ENCODE measurements at regions of chr17 and their contacts with region 1.

Region 1: DNA sequence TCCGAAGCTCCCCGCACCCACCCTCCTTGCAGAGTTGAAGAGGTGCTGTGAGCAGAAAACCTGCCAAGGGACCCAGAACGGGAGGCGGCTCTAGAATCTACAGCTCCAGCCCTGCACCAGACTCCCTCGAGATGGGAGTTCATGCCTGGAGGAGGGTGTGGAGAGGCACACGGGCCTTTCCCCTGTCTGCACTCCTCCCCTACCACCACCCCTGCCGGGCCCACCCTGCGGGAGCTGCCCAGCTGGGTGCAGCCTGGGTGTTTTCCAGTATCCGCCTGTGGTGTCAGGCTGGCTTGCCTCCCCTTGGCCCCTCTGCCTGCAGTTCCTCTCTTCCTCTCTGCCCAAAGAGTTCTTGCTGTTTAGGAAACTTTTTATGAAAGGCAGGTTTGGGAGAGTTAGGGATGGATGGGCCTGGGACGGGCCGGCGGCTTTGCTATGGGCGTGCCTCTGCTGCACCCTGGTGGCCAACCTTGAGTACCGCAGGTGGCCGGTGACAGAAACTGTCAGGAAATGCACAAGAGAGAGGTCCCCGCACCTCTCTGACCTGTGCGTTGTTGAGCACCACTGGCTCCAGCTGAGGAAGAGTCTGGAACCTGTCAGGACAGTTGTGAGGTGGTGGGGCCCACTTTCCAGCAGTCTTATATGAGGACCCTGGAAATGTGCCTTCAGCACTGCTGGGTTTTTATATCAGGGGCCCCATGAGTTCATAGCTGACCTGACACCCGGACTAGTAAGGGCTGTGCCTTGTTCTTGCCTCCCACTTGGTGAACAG is 354.1 kb downstream of the SEC14L1 start:
- DNase-seq: peak; percentile 82
- H3K4me3 Mint-ChIP-seq: peak overlapping the region; percentile 4
- H3K27ac Mint-ChIP-seq: peak overlapping the region; percentile 75
- H3K4me1 Mint-ChIP-seq: peaks cover 13% of the 10 kb centered on the region
- H3K27me3 Mint-ChIP-seq: no peaks in the 10 kb centered on the region

Region 2: DNA sequence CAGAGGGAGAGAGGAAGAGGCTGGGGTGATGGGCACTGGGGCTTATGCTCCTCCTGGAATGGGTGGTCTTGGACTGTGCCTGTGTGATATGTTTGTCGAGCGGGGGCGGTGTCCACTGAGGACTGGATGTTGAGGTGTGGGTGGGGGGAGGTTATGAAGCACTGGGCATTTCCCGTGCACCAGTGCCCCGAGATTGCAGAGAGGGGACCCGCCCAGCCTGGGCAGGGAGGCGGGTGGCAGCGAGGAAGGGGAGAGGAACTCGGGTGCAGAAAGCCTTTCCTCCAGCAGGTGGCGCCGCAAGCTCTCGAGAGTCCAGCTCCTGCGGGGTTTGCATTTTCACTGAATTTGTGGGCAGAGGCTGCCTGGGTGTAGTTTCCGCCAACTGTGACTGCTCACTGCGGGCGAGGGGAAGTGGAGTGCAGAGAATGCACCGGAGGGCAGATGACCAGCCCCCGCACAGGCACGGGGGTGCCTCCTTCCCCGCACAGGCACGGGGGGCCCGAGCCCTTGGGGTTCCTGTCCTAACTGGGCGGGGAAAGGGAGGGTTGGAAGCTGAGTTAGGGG is 163.5 kb before region 1 on chr17:
- CTCF ChIA-PET with region 1: interaction called, 38 read pairs
- POLR2A ChIA-PET with region 1: interaction called, 3 read pairs
- intact Hi-C with region 1: loop called (anchors 1 kb)
- DNase-seq: peak; percentile 97
- H3K4me3 Mint-ChIP-seq: peak overlapping the region; percentile 64
- H3K27ac Mint-ChIP-seq: peak overlapping the region; percentile 78
- H3K4me1 Mint-ChIP-seq: peaks cover 38% of the 10 kb centered on the region
- H3K27me3 Mint-ChIP-seq: no peaks in the 10 kb centered on the region

Region 3: DNA sequence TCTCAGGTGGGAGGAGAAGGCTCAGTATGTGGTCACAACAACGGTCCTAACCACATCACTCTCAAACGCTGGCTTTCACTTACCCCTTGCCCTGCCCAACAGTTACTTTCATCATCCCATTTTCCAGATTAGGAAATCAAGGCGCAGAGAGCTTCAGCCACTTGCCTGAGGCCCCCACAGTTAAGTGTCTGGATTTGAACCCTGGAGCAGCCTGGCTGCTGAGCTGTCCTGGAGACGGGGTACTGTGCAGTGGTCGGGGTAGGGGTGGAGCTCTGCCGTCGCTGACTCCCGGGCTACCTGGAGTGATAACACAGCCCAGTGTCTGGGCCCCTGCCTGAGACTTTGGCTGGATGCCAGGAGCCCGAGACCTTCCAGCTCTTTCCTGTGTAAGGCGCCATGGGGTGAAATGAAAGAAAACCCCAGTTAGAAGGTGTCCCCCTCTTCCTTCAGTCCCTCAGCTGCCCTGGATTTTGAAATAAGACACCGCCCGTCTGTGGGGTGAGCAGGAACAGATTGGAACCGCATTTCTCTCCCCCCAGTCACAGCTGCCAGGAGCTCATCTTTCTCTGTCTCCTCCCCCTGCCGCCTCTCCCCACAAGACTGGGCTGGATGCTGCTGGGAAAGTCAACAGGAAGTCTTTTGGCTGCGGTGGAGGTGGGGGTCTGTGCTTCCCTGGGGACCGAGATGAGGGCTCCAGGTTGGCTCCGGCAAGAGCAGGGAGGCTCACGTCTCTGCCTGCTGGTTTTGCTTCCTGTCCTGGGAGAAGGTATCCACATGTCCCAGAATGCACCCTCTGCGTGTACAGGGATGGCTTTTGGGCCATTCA is 73.8 kb before region 1 on chr17:
- CTCF ChIA-PET with region 1: interaction called, 13 read pairs
- POLR2A ChIA-PET with region 1: no interaction called
- intact Hi-C with region 1: no loop called
- DNase-seq: peak; percentile 65
- H3K4me3 Mint-ChIP-seq: peak overlapping the region; percentile 49
- H3K27ac Mint-ChIP-seq: peak overlapping the region; percentile 69
- H3K4me1 Mint-ChIP-seq: peaks cover 48% of the 10 kb centered on the region
- H3K27me3 Mint-ChIP-seq: no peaks in the 10 kb centered on the region

Region 4: DNA sequence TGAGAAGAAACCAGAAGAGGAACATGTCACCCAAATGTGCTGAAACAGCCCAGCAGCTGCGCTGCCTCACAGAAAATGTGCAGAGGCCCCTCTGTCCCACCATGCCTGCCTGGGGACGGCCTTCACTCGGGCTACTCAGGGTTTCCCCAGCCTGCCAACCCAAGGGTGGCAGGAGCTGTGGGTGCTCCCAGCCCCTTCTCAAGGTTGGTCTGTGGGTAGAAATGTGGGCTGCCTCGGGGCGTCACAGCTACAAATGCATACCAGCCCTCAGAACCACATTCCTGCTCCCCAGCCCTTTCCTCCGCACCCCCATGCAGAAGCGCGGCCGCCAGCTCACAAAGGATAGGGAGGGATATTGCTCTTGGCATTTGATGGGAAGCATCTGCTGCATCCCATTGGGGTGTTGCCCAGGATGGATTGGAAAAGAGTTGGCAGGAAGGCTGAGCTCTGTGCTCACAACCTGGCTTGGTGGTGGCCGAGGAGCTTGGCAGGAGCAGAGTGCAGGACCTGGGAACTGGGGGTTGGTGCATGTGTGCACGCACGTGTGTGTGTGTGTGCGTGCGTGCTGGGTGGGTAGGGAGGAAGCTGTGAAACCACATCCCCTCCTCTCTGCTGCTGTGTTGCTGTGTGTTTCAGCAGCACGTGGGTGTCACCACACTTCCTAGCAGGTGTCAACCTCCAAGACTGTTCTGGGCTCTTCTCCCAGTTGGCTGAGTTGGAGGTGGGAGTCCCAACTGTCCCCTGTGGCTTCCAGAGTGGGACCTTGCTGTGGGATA is 49.7 kb before region 1 on chr17:
- CTCF ChIA-PET with region 1: interaction called, 17 read pairs
- POLR2A ChIA-PET with region 1: interaction called, 3 read pairs
- intact Hi-C with region 1: no loop called
- DNase-seq: peak; percentile 91
- H3K4me3 Mint-ChIP-seq: peak overlapping the region; percentile 72
- H3K27ac Mint-ChIP-seq: peak overlapping the region; percentile 98
- H3K4me1 Mint-ChIP-seq: peaks cover 91% of the 10 kb centered on the region
- H3K27me3 Mint-ChIP-seq: no peaks in the 10 kb centered on the region

Region 5: DNA sequence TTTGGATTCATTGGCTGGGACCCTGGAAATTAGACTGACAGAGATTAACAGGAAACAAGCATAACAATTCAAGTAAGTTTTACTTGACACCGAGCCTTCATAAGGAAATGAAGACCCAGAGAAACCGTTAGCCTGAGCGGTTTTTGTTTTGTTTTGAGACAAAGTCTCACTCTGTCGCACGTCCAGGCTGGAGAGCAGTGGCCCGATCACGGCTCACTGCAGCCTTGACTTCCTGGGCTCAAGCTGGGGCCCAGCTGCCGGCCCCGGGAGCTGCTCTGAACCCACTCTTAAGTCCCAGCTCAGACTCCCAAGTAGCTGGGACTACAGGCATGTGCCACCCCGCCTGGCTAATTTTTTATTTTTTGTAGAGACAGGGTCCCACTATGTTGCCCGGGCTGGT is 32.7 kb before region 1 on chr17:
- CTCF ChIA-PET with region 1: interaction called, 14 read pairs
- POLR2A ChIA-PET with region 1: interaction called, 5 read pairs
- intact Hi-C with region 1: loop called (anchors 5 kb)
- DNase-seq: peak; percentile 72
- H3K4me3 Mint-ChIP-seq: peak overlapping the region; percentile 91
- H3K27ac Mint-ChIP-seq: peak overlapping the region; percentile 100
- H3K4me1 Mint-ChIP-seq: peaks cover 83% of the 10 kb centered on the region
- H3K27me3 Mint-ChIP-seq: no peaks in the 10 kb centered on the region

Region 6: GRCh38 chr17:77476931-77477877 is 17.6 kb before region 1 on chr17:
- CTCF ChIA-PET with region 1: interaction called, 17 read pairs
- POLR2A ChIA-PET with region 1: no interaction called
- intact Hi-C with region 1: no loop called
- DNase-seq: peak; percentile 63
- H3K4me3 Mint-ChIP-seq: no peak overlapping the region
- H3K27ac Mint-ChIP-seq: peak overlapping the region; percentile 66
- H3K4me1 Mint-ChIP-seq: peaks cover 75% of the 10 kb centered on the region
- H3K27me3 Mint-ChIP-seq: no peaks in the 10 kb centered on the region

Region 7: DNA sequence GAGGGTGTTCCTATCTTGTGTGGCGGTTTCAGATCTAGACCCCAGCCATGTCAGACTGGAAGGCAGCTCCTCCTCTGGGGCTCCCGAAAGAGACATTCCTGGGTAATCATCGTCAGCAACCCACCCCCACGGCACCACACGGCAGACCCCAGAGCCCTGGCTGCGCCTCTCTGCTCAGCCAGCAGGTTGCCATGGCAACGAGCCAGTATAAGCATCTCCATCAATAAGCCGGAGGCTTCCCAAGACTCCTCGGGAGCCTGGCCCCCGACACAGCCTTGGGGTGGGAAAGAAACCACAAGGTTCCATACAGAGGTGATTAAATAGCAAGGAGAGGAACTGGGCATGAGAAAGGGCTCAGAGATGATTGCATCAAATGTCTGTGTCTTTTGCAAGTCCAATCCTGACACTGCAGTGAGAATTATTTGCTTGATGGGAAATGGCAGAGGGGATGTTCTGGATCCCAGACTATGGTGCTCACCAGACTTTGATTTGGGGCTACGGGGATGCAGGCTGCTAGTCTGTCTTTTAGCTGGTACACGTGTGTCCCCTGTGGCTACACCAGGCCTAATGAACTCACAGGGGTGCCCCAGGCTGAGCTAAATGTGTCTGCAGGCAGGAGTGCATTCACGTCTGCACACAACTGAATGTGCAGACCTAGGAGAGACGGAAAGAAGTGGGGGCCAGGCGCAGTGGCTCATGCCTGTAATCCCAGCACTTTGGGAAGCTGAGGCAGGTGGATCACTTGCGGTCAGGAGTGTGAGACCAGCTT is 143.1 kb after region 1 on chr17:
- CTCF ChIA-PET with region 1: no interaction called
- POLR2A ChIA-PET with region 1: no interaction called
- intact Hi-C with region 1: no loop called
- DNase-seq: no peak
- H3K4me3 Mint-ChIP-seq: no peak overlapping the region
- H3K27ac Mint-ChIP-seq: no peak overlapping the region
- H3K4me1 Mint-ChIP-seq: peaks cover 17% of the 10 kb centered on the region
- H3K27me3 Mint-ChIP-seq: peaks cover 3% of the 10 kb centered on the region